ENCODE measurements at regions of chr12 and their contacts with region 1.

Region 1: GRCh38 chr12:120961604-120962531 is 16.5 kb upstream of the HNF1A start:
- DNase-seq: peak; percentile 82 to 84
- H3K4me3 ChIP-seq: no peak overlapping the region
- H3K4me3 Mint-ChIP-seq: no peak overlapping the region
- H3K27ac Mint-ChIP-seq: peak overlapping the region; percentile 40
- H3K4me1 ChIP-seq: peaks cover 53% of the 10 kb centered on the region
- H3K4me1 Mint-ChIP-seq: peaks cover 23% of the 10 kb centered on the region
- H3K27me3 ChIP-seq: no peaks in the 10 kb centered on the region
- H3K27me3 Mint-ChIP-seq: no peaks in the 10 kb centered on the region
- CTCF ChIP-seq: no peak

Region 2: DNA sequence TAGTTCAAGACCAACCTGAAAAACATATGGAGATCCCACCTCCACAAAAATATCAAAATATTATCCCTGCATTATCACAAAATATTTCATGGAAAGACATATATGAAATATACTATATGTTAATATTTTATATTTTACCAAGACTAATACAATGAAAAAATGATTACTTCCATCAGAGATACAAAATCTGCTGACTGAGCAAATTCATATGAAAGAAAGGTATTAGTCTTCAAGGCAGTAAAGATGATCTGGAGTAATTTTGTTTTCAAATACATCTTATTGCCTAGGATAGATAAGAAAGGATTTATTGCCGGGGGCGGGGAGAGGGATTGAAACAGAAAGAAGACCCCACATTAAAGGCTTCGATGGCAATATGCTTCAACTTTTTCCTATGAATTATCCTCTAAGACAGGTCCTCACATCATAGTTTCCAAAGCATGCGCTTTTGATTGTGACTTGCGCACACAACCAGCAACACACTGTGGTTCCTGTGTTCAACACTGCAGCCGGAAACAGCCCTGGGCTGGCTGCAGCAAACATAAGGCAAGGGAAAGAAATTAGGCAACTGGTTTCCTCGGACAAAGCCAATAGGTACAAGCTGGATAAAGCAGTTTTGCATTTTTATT is 140.9 kb before region 1 on chr12:
- CTCF ChIA-PET with region 1: no interaction called
- POLR2A ChIA-PET with region 1: no interaction called
- intact Hi-C with region 1: no loop called
- DNase-seq: no peak
- H3K4me3 ChIP-seq: no peak overlapping the region
- H3K4me3 Mint-ChIP-seq: no peak overlapping the region
- H3K27ac Mint-ChIP-seq: no peak overlapping the region
- H3K4me1 ChIP-seq: peaks cover 33% of the 10 kb centered on the region
- H3K4me1 Mint-ChIP-seq: peaks cover 35% of the 10 kb centered on the region
- H3K27me3 ChIP-seq: no peaks in the 10 kb centered on the region
- H3K27me3 Mint-ChIP-seq: no peaks in the 10 kb centered on the region
- CTCF ChIP-seq: no peak

Region 3: DNA sequence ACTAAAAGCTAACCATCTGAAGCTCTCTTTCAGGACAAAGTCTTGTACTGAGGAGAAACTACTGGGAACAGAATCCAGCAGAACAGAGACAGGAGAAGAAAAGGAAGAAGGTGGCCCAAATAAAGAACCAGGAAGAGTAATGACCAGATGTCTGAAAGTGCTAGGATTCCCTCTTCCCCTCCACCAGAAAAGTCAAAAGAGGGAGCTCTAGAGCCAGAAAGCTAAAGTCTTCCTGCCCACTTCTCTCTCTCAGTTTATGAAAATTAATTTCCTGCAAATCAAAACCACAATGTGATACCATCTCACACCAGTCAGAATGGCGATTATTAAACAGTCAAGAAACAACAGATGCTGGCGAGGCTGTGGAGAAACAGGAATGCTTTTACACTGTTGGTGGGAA is 104.9 kb before region 1 on chr12:
- CTCF ChIA-PET with region 1: no interaction called
- POLR2A ChIA-PET with region 1: no interaction called
- intact Hi-C with region 1: loop called (anchors 10 kb)
- DNase-seq: peak in 1 of 2 experiments; percentile 26
- H3K4me3 ChIP-seq: no peak overlapping the region
- H3K4me3 Mint-ChIP-seq: no peak overlapping the region
- H3K27ac Mint-ChIP-seq: no peak overlapping the region
- H3K4me1 ChIP-seq: no peaks in the 10 kb centered on the region
- H3K4me1 Mint-ChIP-seq: peaks cover 13% of the 10 kb centered on the region
- H3K27me3 ChIP-seq: no peaks in the 10 kb centered on the region
- H3K27me3 Mint-ChIP-seq: no peaks in the 10 kb centered on the region
- CTCF ChIP-seq: peak; percentile 27 to 40

Region 4: GRCh38 chr12:120944645-120945231 is 17.1 kb before region 1 on chr12:
- CTCF ChIA-PET with region 1: no interaction called
- POLR2A ChIA-PET with region 1: no interaction called
- intact Hi-C with region 1: loop called (anchors 2 kb)
- DNase-seq: peak; percentile 69 to 83
- H3K4me3 ChIP-seq: no peak overlapping the region
- H3K4me3 Mint-ChIP-seq: peak overlapping the region; percentile 6
- H3K27ac Mint-ChIP-seq: peak overlapping the region; percentile 40
- H3K4me1 ChIP-seq: peaks cover 11% of the 10 kb centered on the region
- H3K4me1 Mint-ChIP-seq: peaks cover 6% of the 10 kb centered on the region
- H3K27me3 ChIP-seq: no peaks in the 10 kb centered on the region
- H3K27me3 Mint-ChIP-seq: no peaks in the 10 kb centered on the region
- CTCF ChIP-seq: peak; percentile 81 to 87

Measured in Caco-2 (cell line).